Vagina (tissue), 2 donors: ENCODE measurements at regions of chr1 and their contacts with region 1.

Region 1: GRCh38 chr1:8026153-8026975 is at the start of gene ERRFI1:
- DNase-seq: no peak
- H3K4me3 ChIP-seq: peak within 1 kb of the TSS; percentile 69 to 93
- H3K27ac ChIP-seq: peak within 1 kb of the TSS; percentile 94
- H3K4me1 ChIP-seq: peaks cover 60% of the 10 kb centered on the region
- H3K27me3 ChIP-seq: no peaks in the 10 kb centered on the region
- CTCF ChIP-seq: no peak
- POLR2A ChIP-seq: peak; percentile 79 to 98
- total RNA-seq, gene ERRFI1: 160 TPM

Region 2: DNA sequence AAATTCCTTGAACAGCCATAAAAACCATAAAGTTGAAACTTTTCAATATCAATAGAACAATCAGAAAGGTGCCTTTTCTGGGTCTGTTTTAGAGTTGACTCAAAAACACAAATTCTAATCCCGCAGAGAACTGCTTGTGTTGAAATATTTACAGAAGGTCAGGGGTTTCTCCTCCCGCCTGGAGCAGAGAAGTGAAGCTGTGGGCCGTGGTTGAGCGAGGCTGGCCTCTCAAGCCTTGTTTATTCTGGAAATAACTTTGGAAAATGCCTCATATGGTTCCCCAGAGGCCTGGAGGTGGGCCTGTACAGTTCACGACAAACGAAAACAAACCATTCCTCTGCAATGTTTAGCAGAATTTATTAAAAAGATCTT is 90.5 kb after region 1 on chr1:
- intact Hi-C with region 1: loop called (anchors 10 kb)
- DNase-seq: no peak
- H3K4me3 ChIP-seq: no peak overlapping the region
- H3K27ac ChIP-seq: peak overlapping the region; percentile 84
- H3K4me1 ChIP-seq: peaks cover 66% of the 10 kb centered on the region
- H3K27me3 ChIP-seq: no peaks in the 10 kb centered on the region
- CTCF ChIP-seq: no peak
- POLR2A ChIP-seq: no peak

Region 3: GRCh38 chr1:8238851-8239305 is 212.5 kb after region 1 on chr1:
- intact Hi-C with region 1: loop called (anchors 5 kb)
- DNase-seq: no peak
- H3K4me3 ChIP-seq: no peak overlapping the region
- H3K27ac ChIP-seq: peak overlapping the region; percentile 61
- H3K4me1 ChIP-seq: peaks cover 7% of the 10 kb centered on the region
- H3K27me3 ChIP-seq: no peaks in the 10 kb centered on the region
- CTCF ChIP-seq: no peak
- POLR2A ChIP-seq: no peak

Region 4: DNA sequence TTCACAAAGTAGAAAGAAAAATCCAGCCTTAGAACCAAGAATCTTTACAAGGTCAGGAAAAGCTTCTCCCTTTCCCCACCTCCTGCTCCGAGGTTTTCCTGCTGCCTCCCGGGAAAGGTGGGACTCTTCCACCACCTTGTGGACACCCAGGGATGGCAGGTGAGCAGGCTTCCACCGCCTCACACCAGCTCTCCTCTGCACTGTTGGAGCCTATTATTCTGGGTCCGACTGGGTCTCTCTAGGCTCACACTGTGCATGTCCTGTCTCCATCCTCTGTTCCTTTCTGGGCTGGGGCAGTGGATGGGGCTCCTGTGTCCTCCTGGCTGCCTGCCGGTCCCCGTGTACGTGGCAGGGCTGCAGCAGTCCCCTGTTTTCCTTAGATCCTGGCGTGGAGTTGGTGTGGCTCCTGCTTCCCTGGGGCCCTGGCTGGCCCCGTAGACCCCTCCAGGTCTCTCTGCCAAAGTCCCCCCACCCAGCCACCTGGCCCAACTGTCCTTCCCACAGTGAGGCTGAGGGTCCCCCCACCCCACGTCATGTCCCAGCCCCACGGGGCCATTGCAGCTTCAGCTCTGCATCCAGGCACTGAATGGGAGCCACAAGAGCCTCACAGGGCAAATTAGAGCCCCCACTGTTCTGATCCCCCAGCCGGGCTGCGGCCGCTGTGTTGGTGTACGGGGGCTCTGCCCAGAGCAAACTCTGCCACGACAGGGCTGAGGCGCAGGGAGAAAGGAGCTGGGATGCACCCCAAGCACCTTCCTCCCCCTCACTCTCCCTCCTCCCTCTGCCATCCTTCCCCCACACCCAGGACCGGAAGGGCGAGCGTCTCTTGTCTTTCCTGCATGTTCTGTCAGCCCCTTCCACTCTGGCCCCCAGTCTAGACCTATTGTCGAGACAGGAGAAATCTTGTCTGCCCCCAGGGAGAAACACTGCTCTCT is 288.2 kb after region 1 on chr1:
- intact Hi-C with region 1: loop called (anchors 5 kb)
- DNase-seq: no peak
- H3K4me3 ChIP-seq: no peak overlapping the region
- H3K27ac ChIP-seq: no peak overlapping the region
- H3K4me1 ChIP-seq: peaks cover 13% of the 10 kb centered on the region
- H3K27me3 ChIP-seq: no peaks in the 10 kb centered on the region
- CTCF ChIP-seq: peak; percentile 57 to 96 (median 86)
- POLR2A ChIP-seq: no peak